GM12878 (cell line): ENCODE measurements at regions of chr15 and their contacts with region 1.

Region 1: DNA sequence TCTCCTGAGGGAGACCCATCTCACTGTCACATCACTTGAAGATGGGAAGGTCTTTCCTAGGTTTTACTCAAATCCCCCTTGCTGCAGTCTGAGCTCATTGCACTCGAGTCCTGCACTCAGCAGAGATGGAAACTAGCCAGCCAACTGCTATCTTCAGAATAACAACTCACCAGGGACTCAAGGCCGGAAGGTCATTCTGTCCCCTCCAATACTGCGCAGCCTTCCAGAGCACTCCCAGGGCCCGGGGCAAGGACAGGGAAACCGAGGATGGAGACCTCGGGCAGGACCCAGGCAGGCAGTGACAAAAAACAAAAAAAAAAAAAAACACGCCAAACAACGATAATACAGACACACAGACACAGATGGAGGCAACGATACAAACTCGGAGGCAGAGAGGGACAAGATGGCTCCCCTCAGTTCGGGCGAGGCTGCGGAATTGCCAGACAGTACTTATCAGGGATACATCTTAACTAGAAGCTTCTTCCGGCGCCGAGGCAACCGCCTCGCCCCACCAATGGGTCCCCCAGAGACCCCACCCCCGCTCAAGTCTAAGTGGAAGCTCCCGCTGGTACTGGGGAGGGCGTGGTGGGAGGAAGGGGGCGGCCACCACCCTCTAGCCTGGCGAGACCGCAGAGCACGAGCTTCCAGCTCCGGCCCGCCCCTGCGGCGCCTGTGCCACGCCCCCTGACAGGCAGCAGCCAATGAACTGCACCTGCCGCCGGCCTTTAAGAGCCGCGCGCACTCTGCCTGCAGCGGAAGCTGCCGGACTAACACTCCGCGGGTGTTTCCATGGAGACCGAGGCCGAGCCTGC is 7.0 kb upstream of the MAP1A start:
- DNase-seq: peak; percentile 85
- ATAC-seq: peak; percentile 99
- H3K4me3 ChIP-seq: peak overlapping the region; percentile 76
- H3K27ac ChIP-seq: peak overlapping the region; percentile 40
- H3K4me1 ChIP-seq: peaks cover 6% of the 10 kb centered on the region
- H3K27me3 ChIP-seq: peaks cover 0 to 3% of the 10 kb centered on the region in 2 experiments; a peak in 2 of 4 replicates
- CTCF ChIP-seq: 0 out of 6 replicates have a peak, but pooled peaks of 1 of the 3 experiments have one; percentile 21
- EP300 ChIP-seq: no peak
- POLR2A ChIP-seq: peak; percentile 80
- RAD21 ChIP-seq: no peak

Region 2: GRCh38 chr15:43370975-43371974 is 139.1 kb before region 1 on chr15 and contains the starts of genes TUBGCP4 and ZSCAN29:
- CTCF ChIA-PET with region 1: interaction called, 25 read pairs
- POLR2A ChIA-PET with region 1: interaction called, 4 read pairs
- RAD21 ChIA-PET with region 1: interaction called, 5 read pairs
- SMC1A ChIA-PET with region 1: interaction called, 6 read pairs
- in situ Hi-C with region 1: no loop called
- intact Hi-C with region 1: no loop called
- DNase-seq: peak; percentile 34
- ATAC-seq: peak; percentile 91
- H3K4me3 ChIP-seq: peak within 1 kb of the TSS; percentile 97
- H3K27ac ChIP-seq: peak within 1 kb of the TSS; percentile 76
- H3K4me1 ChIP-seq: peaks cover 8% of the 10 kb centered on the region
- H3K27me3 ChIP-seq: no peaks in the 10 kb centered on the region
- CTCF ChIP-seq: peak; percentile 47 to 69 (median 49); a peak in 5 of 6 replicates
- EP300 ChIP-seq: no peak
- POLR2A ChIP-seq: peak; percentile 92
- RAD21 ChIP-seq: no peak
- polyA plus RNA-seq, gene TUBGCP4: 6.3 to 8.0 TPM
- polyA plus RNA-seq, gene ZSCAN29: 1.7 to 2.3 TPM

Region 3: DNA sequence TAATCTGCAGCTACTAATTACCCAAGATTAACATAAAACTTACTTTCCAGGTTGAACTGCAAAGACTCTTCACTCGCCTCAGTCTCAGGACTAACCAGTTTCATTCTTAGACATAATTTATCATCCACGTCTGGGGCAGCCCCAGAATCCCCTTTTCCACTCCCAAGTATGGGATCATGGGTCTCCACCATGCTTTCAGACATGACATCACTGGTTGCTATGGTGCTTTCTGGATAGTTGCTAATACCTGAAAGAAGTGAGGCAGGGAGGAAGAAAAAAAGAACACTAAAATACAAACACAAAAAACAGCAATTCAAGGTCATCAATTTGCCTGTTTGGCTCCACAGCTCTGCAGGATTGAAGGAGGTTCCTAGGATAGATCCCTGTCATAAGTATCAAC is 64.1 kb before region 1 on chr15:
- CTCF ChIA-PET with region 1: interaction called, 42 read pairs
- POLR2A ChIA-PET with region 1: no interaction called
- RAD21 ChIA-PET with region 1: interaction called, 29 read pairs
- SMC1A ChIA-PET with region 1: interaction called, 17 read pairs
- in situ Hi-C with region 1: no loop called
- intact Hi-C with region 1: loop called (anchors 5 kb)
- DNase-seq: no peak
- ATAC-seq: no peak
- H3K4me3 ChIP-seq: no peak overlapping the region
- H3K27ac ChIP-seq: no peak overlapping the region
- H3K4me1 ChIP-seq: peaks cover 1% of the 10 kb centered on the region; the same call in 1 of the 2 replicates
- H3K27me3 ChIP-seq: no peaks in the 10 kb centered on the region
- CTCF ChIP-seq: no peak
- EP300 ChIP-seq: no peak
- POLR2A ChIP-seq: no peak
- RAD21 ChIP-seq: no peak

Region 4: GRCh38 chr15:43473885-43474284 is 36.5 kb before region 1 on chr15:
- CTCF ChIA-PET with region 1: interaction called, 11 read pairs
- POLR2A ChIA-PET with region 1: no interaction called
- RAD21 ChIA-PET with region 1: interaction called, 3 read pairs
- SMC1A ChIA-PET with region 1: interaction called, 7 read pairs
- in situ Hi-C with region 1: no loop called
- intact Hi-C with region 1: no loop called
- DNase-seq: no peak
- ATAC-seq: no peak
- H3K4me3 ChIP-seq: no peak overlapping the region
- H3K27ac ChIP-seq: no peak overlapping the region
- H3K4me1 ChIP-seq: no peaks in the 10 kb centered on the region
- H3K27me3 ChIP-seq: no peaks in the 10 kb centered on the region
- CTCF ChIP-seq: no peak
- EP300 ChIP-seq: no peak
- POLR2A ChIP-seq: no peak
- RAD21 ChIP-seq: no peak

Region 5: GRCh38 chr15:43492673-43493601 is 17.5 kb before region 1 on chr15 and contains the start of gene TP53BP1:
- CTCF ChIA-PET with region 1: interaction called, 88 read pairs
- POLR2A ChIA-PET with region 1: interaction called, 14 read pairs
- RAD21 ChIA-PET with region 1: interaction called, 18 read pairs
- SMC1A ChIA-PET with region 1: interaction called, 13 read pairs
- in situ Hi-C with region 1: no loop called
- intact Hi-C with region 1: no loop called
- DNase-seq: peak; percentile 75
- ATAC-seq: peak; percentile 100
- H3K4me3 ChIP-seq: peak within 1 kb of the TSS; percentile 88
- H3K27ac ChIP-seq: peak within 1 kb of the TSS; percentile 58
- H3K4me1 ChIP-seq: peaks cover 3% of the 10 kb centered on the region; the same call in 1 of the 2 replicates
- H3K27me3 ChIP-seq: no peaks in the 10 kb centered on the region
- CTCF ChIP-seq: no peak
- EP300 ChIP-seq: no peak
- POLR2A ChIP-seq: peak; percentile 74
- RAD21 ChIP-seq: no peak
- polyA plus RNA-seq, gene TP53BP1: 6.2 to 6.4 TPM